ENCODE measurements at regions of chr1 and their contacts with region 1.

Region 1: GRCh38 chr1:210584439-210585113 is 255.9 kb downstream of the HHAT start:
- DNase-seq: peak; percentile 30 to 41 (median 32)
- H3K4me3 ChIP-seq: no peak overlapping the region
- H3K4me3 Mint-ChIP-seq: no peak overlapping the region
- H3K27ac ChIP-seq: no peak overlapping the region
- H3K27ac Mint-ChIP-seq: peak overlapping the region in 1 of 7 donors; percentile 5
- H3K4me1 ChIP-seq: no peaks in the 10 kb centered on the region
- H3K4me1 Mint-ChIP-seq: peaks cover 0 to 5% (median 0%) of the 10 kb centered on the region in 4 donors
- H3K27me3 ChIP-seq: no peaks in the 10 kb centered on the region
- H3K27me3 Mint-ChIP-seq: no peaks in the 10 kb centered on the region

Region 2: DNA sequence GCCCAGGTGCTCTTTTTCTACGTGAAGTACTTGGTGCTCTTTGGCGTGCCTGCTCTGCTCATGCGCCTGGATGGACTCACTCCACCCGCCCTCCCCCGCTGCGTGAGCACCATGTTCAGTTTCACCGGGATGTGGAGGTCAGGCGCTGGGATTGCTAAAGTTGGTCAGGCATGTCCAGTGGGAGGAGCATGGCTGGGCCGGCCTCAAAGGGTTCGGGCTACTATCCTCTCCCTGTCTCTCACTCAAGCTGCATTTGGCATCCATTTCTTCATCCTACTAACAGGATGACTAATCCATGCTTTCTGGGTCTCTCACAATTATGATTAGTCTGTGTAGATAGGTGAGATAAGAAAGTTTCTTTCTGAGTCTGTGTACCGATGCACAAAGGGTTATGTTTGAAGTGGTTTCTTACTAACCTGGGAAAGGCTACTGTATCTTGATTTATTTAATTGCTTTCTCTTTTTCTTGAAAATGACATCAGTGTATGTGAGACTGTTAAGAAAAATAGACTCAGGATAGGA is 120.0 kb before region 1 on chr1:
- CTCF ChIA-PET with region 1: no interaction called
- POLR2A ChIA-PET with region 1: no interaction called
- intact Hi-C with region 1: no loop called
- DNase-seq: no peak
- H3K4me3 ChIP-seq: no peak overlapping the region
- H3K4me3 Mint-ChIP-seq: no peak overlapping the region
- H3K27ac ChIP-seq: no peak overlapping the region
- H3K27ac Mint-ChIP-seq: peak overlapping the region in 1 of 7 donors; percentile 48
- H3K4me1 ChIP-seq: no peaks in the 10 kb centered on the region
- H3K4me1 Mint-ChIP-seq: peaks cover 0 to 6% (median 4%) of the 10 kb centered on the region in 4 donors
- H3K27me3 ChIP-seq: no peaks in the 10 kb centered on the region
- H3K27me3 Mint-ChIP-seq: no peaks in the 10 kb centered on the region

Region 3: DNA sequence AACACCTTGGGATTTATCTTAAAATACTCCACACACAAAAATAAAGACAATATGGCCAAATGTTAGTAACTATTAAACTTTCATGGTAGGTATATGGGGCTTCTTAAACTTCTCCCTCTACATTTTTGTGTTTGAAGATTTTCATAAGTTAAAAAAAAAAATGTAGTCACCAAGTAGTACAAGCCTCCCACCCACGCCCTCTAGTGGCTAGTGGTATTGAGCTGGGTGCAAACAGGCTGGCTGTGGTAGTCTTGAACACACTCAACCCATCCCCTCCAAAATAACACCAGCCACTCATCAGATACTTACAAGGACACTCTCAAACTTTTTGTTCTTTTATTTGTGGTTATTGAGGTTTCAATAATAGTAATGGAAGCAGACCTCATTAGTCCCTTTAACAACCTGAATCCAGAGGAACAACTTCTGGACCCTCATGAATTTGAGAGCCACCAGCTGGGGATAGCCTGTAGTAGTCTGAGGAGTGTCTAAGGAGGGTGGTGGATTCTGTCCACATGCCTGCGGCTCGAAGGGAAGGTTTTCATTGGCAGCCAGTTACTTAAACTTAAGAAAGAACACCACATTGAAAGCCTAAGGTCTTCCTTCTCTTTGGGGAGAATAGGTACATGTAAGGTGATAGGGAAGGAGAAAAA is 891.7 kb after region 1 on chr1:
- CTCF ChIA-PET with region 1: no interaction called
- POLR2A ChIA-PET with region 1: no interaction called
- intact Hi-C with region 1: loop called (anchors 10 kb)
- DNase-seq: peak; percentile 69 to 73 (median 71)
- H3K4me3 ChIP-seq: no peak overlapping the region
- H3K4me3 Mint-ChIP-seq: no peak overlapping the region
- H3K27ac ChIP-seq: no peak overlapping the region
- H3K27ac Mint-ChIP-seq: no peak overlapping the region
- H3K4me1 ChIP-seq: no peaks in the 10 kb centered on the region
- H3K4me1 Mint-ChIP-seq: peaks cover 3 to 6% (median 4%) of the 10 kb centered on the region in 4 donors
- H3K27me3 ChIP-seq: peaks cover 10% of the 10 kb centered on the region
- H3K27me3 Mint-ChIP-seq: peaks cover 14 to 25% of the 10 kb centered on the region in 2 donors